ENCODE measurements at regions of chr19 and their contacts with region 1.

Region 1: DNA sequence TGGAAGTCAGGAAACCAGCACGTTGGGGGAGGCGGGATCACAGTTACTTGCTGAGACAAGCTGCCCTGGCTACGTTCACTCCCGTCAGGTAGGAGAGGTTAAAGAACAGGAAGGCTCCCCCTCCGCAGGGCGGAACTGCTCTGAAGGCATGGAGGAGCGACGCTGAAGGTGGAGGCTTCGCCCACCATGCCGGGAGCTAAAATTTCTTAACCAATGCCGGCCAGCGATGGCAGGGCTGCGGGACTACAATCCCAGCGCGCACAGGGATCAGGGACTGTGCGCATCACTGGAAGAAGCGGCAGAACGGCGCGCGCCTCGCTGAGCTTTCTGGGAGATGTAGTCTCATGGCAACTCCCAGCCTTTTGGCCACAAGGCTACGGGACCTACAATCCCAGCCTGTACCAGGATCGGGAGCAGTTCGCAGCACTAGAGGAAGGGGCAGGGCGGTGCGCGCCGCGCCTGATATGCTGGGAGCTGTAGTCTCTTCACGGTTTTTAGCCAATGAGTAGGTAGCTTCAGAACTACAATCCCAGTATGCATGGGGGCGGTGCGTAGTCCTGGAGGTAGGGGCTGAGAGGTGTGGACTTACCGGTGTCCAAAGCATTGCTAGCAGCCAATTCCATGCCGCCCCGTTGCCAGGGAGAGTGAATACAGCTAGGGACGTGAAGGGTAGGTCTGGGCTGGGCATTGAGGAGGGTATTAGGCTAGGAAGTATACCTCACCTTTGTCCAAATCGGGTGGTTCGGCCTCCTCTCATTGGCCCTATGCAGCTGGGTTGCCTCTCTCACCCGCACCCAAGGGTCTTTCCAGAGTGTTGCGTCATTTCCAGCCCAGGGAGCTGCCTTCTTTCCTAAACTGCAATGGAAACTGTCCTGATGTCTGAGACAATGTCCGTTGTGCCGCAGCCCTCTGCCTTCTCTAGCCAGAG is 12.8 kb upstream of the ZNF682 start:
- DNase-seq: peak; percentile 85
- H3K4me3 ChIP-seq: peak overlapping the region; percentile 84
- CTCF ChIP-seq: no peak

Region 2: GRCh38 chr19:20039203-20039723 is 12.8 kb before region 1 on chr19 and contains the start of gene ZNF682:
- CTCF ChIA-PET with region 1: no interaction called
- POLR2A ChIA-PET with region 1: interaction called, 10 read pairs
- DNase-seq: peak; percentile 59
- H3K4me3 ChIP-seq: peak within 1 kb of the TSS; percentile 80
- CTCF ChIP-seq: no peak